Heart right ventricle (tissue), 16 donors: ENCODE measurements at regions of chr7 and their contacts with region 1.

Region 1: GRCh38 chr7:106112117-106112971 is at the start of gene SYPL1:
- DNase-seq: peak; percentile 93 to 95
- ATAC-seq: peak; percentile 95 to 97 (median 96)
- H3K4me3 ChIP-seq: peak within 1 kb of the TSS; percentile 45 to 82 (median 70)
- H3K27ac ChIP-seq: peak within 1 kb of the TSS; percentile 94 to 99 (median 98)
- H3K4me1 ChIP-seq: peaks cover 4 to 46% (median 40%) of the 10 kb centered on the region in 9 donors
- H3K27me3 ChIP-seq: no peaks in the 10 kb centered on the region
- CTCF ChIP-seq: peak in 4 of 9 donors; percentile 10 to 52 (median 46)
- total RNA-seq, gene SYPL1: 63.9 to 121 (median 80.9) TPM

Region 2: GRCh38 chr7:105589356-105590077 is 522.8 kb before region 1 on chr7:
- intact Hi-C with region 1: no loop called
- DNase-seq: peak in 1 of 2 donors; percentile 38
- ATAC-seq: peak; percentile 63 to 88 (median 66)
- H3K4me3 ChIP-seq: no peak overlapping the region
- H3K27ac ChIP-seq: no peak overlapping the region
- H3K4me1 ChIP-seq: peaks cover 0 to 16% (median 5%) of the 10 kb centered on the region in 9 donors
- H3K27me3 ChIP-seq: no peaks in the 10 kb centered on the region
- CTCF ChIP-seq: peak in 8 of 9 donors; percentile 20 to 58 (median 52)

Region 3: DNA sequence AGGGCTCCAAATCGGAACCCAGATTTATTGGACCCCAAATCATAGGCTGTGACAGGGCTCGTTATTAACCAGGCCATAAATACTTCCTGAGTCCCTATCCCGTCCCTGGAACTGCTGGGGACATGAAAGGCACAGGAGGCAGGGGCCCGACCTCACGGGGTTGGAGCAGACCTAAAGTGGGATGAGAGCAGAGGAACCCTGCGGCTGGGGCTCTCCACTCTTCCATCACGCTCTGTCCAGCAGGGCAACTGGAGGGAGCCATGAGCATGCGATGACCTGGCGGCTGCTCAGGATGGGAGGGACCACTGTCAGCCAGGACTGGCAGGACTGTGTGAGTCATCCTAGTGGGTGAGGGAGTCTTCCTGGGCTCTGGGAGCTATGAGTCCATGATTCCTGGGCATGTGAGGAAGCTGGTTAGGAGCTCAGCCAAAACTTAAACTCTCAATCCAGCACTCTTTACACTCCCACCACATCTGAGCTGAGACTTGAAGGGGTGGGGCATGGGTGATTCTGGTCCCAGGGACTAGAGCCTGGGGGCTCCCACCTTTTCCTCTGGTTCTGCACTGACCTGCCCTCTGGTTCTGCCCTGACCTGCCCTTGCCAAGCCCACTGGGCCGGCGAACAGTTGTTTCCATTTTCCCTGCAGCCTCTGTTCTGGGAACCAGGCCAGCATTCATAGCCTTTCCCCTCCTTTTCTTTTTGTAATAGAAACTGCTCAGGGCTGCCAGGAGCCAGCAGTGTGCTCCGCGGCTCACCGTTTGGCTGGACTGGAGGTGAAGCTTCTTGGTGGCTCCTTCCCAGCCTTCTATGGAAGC is 47.4 kb before region 1 on chr7:
- intact Hi-C with region 1: loop called in 8 of 10 experiments (anchors 1 to 10 kb)
- DNase-seq: peak; percentile 80 to 91
- ATAC-seq: peak; percentile 88 to 97 (median 93)
- H3K4me3 ChIP-seq: peak overlapping the region in 8 of 10 donors; percentile 15 to 48 (median 36)
- H3K27ac ChIP-seq: peak overlapping the region; percentile 39 to 94 (median 86)
- H3K4me1 ChIP-seq: peaks cover 3 to 56% (median 39%) of the 10 kb centered on the region in 9 donors
- H3K27me3 ChIP-seq: no peaks in the 10 kb centered on the region
- CTCF ChIP-seq: peak in 4 of 9 donors; percentile 7 to 36 (median 30)

Region 4: GRCh38 chr7:106128836-106129235 is 16.5 kb after region 1 on chr7:
- intact Hi-C with region 1: no loop called
- DNase-seq: no peak
- ATAC-seq: no peak
- H3K4me3 ChIP-seq: no peak overlapping the region
- H3K27ac ChIP-seq: peak overlapping the region in 2 of 10 donors; percentile 8 to 39
- H3K4me1 ChIP-seq: peaks cover 0 to 39% (median 16%) of the 10 kb centered on the region in 9 donors
- H3K27me3 ChIP-seq: no peaks in the 10 kb centered on the region
- CTCF ChIP-seq: no peak